ENCODE measurements at regions of chr13 and their contacts with region 1.

Region 1: DNA sequence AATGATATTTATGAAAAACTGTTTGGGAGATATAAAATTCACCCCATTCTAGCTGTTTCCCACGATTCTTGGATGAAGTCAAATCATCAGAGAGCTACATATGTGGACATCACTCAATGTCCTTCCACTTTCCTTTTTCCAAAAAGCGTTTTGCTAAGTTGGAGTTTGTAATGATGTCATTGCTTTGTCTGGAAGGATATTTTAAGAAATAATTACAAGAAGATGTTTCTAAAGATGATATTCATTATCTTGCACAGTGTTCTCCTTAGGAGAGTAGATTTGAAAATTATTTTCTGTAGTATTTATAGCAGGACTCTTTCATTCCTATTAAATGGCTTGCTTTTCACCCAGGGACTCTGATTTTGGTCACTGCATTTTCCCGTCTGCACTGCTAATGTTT is 851.2 kb downstream of the EFNB2 start:
- DNase-seq: no peak
- ATAC-seq: no peak
- H3K4me3 ChIP-seq: no peak overlapping the region
- H3K27ac ChIP-seq: no peak overlapping the region
- H3K4me1 ChIP-seq: no peaks in the 10 kb centered on the region
- H3K27me3 ChIP-seq: no peaks in the 10 kb centered on the region
- CTCF ChIP-seq: no peak
- EP300 ChIP-seq: no peak
- POLR2A ChIP-seq: no peak
- RAD21 ChIP-seq: no peak

Region 2: DNA sequence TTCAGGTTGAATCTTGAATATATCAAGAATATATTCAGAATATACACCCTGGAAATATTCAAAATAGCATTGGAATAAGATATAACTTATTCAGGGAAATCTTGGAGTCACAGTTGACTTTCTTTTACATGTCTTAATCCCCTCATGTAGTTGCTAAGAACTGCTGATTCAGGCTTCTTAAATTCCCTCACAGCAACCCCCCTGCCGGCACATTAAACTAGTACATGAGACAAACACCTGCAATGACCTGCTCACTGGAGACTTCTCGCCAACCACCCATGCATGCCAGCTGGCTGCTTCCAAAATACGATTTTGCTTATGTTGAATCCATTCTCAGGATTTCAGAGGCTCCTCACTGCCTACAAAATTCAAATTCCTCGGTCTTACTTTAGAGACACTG is 145.9 kb before region 1 on chr13:
- CTCF ChIA-PET with region 1: no interaction called
- POLR2A ChIA-PET with region 1: interaction called, 11 read pairs
- RAD21 ChIA-PET with region 1: no interaction called
- SMC1A ChIA-PET with region 1: no interaction called
- in situ Hi-C with region 1: no loop called
- intact Hi-C with region 1: no loop called
- DNase-seq: no peak
- ATAC-seq: no peak
- H3K4me3 ChIP-seq: no peak overlapping the region
- H3K27ac ChIP-seq: no peak overlapping the region
- H3K4me1 ChIP-seq: no peaks in the 10 kb centered on the region
- H3K27me3 ChIP-seq: no peaks in the 10 kb centered on the region
- CTCF ChIP-seq: no peak
- EP300 ChIP-seq: no peak
- POLR2A ChIP-seq: no peak
- RAD21 ChIP-seq: no peak

Region 3: DNA sequence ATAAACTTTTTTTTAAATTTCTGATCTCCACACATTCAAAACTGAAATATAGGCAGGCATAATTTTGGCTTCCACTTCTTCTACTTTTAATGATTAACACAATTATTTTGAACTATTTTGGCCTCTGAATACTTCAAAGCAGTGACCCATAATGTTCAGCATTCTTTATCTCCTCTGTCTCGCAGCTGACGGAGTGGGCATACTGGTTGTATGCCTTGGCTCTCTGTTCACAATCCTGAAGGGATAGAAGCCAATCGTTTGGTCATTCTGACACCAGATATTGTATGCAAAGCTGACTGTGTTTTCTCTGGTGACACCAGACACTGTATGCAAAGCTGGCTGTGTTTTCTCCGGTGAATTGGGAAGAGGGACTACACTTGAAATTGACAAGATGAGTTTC is 18.2 kb after region 1 on chr13:
- CTCF ChIA-PET with region 1: no interaction called
- POLR2A ChIA-PET with region 1: no interaction called
- RAD21 ChIA-PET with region 1: no interaction called
- SMC1A ChIA-PET with region 1: no interaction called
- in situ Hi-C with region 1: no loop called
- intact Hi-C with region 1: no loop called
- DNase-seq: no peak
- ATAC-seq: no peak
- H3K4me3 ChIP-seq: no peak overlapping the region
- H3K27ac ChIP-seq: no peak overlapping the region
- H3K4me1 ChIP-seq: no peaks in the 10 kb centered on the region
- H3K27me3 ChIP-seq: no peaks in the 10 kb centered on the region
- CTCF ChIP-seq: no peak
- EP300 ChIP-seq: no peak
- POLR2A ChIP-seq: no peak
- RAD21 ChIP-seq: no peak

Measured in GM12878 (cell line).